ENCODE measurements at regions of chr5 and their contacts with region 1.

Region 1: GRCh38 chr5:119302916-119303897 is 52.6 kb upstream of the TNFAIP8 start:
- DNase-seq: no peak
- ATAC-seq: peak; percentile 28
- H3K4me3 Mint-ChIP-seq: peak overlapping the region; percentile 29
- H3K27ac Mint-ChIP-seq: peak overlapping the region; percentile 64
- H3K4me1 Mint-ChIP-seq: peaks cover 72% of the 10 kb centered on the region
- H3K27me3 Mint-ChIP-seq: no peaks in the 10 kb centered on the region

Region 2: GRCh38 chr5:119250946-119251901 is 52.0 kb before region 1 on chr5:
- POLR2A ChIA-PET with region 1: no interaction called
- DNase-seq: no peak
- ATAC-seq: no peak
- H3K4me3 Mint-ChIP-seq: no peak overlapping the region
- H3K27ac Mint-ChIP-seq: no peak overlapping the region
- H3K4me1 Mint-ChIP-seq: no peaks in the 10 kb centered on the region
- H3K27me3 Mint-ChIP-seq: no peaks in the 10 kb centered on the region

Region 3: GRCh38 chr5:119276978-119277377 is 26.2 kb before region 1 on chr5:
- POLR2A ChIA-PET with region 1: interaction called, 16 read pairs
- DNase-seq: no peak
- ATAC-seq: no peak
- H3K4me3 Mint-ChIP-seq: peak overlapping the region; percentile 69
- H3K27ac Mint-ChIP-seq: peak overlapping the region; percentile 84
- H3K4me1 Mint-ChIP-seq: peaks cover 85% of the 10 kb centered on the region
- H3K27me3 Mint-ChIP-seq: no peaks in the 10 kb centered on the region

Region 4: GRCh38 chr5:119290161-119290569 is 13.0 kb before region 1 on chr5:
- POLR2A ChIA-PET with region 1: interaction called, 10 read pairs
- DNase-seq: no peak
- ATAC-seq: peak; percentile 51
- H3K4me3 Mint-ChIP-seq: peak overlapping the region; percentile 75
- H3K27ac Mint-ChIP-seq: peak overlapping the region; percentile 86
- H3K4me1 Mint-ChIP-seq: peaks cover 74% of the 10 kb centered on the region
- H3K27me3 Mint-ChIP-seq: no peaks in the 10 kb centered on the region

Measured in activated naive CD8-positive, alpha-beta T cell treated with anti-CD3 and anti-CD28 coated beads, Interleukin-2, amount 10 ng/mL, durations not matched to agents 7 days and 5 days (primary cell).